ENCODE measurements at regions of chr12 and their contacts with region 1.

Region 1: DNA sequence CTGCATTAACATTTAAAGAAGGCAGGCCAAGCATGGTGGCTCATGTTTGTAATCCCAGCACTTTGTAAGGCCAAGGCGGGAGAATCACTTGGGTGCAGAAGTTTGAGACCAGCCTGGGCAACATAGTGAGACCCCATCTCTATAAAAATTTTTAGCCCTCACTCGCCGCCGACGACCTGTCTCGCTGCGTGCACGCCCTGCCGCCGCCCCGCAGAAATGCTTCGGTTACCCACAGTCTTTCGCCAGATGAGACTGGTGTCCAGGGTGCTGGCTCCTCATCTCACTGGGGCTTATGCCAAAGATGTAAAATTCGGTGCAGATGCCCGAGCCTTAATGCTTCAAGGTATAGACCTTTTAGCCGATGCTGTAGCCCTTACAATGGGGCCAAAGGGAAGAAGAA is 10.8 kb upstream of the RBMS2 start:
- DNase-seq: no peak
- ATAC-seq: no peak
- H3K4me3 ChIP-seq: no peak overlapping the region
- H3K27ac ChIP-seq: no peak overlapping the region
- H3K4me1 ChIP-seq: no peaks in the 10 kb centered on the region
- H3K27me3 ChIP-seq: no peaks in the 10 kb centered on the region

Region 2: GRCh38 chr12:56571126-56571525 is 60.3 kb after region 1 on chr12:
- intact Hi-C with region 1: loop called in 3 of 4 experiments (anchors 2 to 5 kb)
- DNase-seq: peak in 2 of 3 donors; percentile 53 to 55
- ATAC-seq: peak; percentile 8 to 12
- H3K4me3 ChIP-seq: no peak overlapping the region
- H3K27ac ChIP-seq: no peak overlapping the region
- H3K4me1 ChIP-seq: peaks cover 6% of the 10 kb centered on the region
- H3K27me3 ChIP-seq: no peaks in the 10 kb centered on the region

Region 3: DNA sequence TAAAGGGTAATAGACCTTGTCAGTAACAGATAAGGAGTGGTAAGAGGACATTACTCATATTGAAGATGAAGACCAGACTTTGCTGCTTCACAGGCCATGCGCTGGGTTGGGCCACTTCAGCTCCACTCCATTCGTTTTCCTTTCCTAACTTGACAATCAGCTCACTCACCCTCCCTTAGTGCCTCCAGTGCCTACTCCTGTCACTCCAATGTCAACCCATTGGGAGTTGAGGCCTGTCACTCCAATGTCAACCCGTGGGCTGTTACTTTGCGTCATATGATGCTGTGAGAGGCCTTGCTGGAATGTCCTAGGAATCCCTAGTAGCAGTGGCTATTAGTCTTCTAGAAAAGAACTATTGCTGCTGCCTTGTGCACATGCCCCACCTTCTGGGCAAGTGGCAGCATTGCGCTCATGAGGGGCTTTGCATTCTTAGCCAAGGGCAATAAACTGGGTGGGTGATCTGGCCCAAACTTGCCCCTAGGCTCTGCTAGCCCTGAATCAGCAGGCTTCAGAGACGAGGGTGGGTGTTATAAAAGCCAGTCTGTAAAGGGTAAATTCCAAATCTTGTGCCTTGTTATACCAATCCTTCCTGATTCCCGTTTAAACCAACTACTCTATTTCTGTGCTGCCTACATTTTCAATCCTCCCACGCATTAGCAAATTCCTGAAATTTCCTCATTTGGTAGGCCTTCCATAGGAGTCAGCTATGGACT is 83.3 kb after region 1 on chr12:
- intact Hi-C with region 1: loop called in 1 of 4 experiments (anchors 5 kb)
- DNase-seq: peak; percentile 37 to 70 (median 65)
- ATAC-seq: peak; percentile 38 to 47
- H3K4me3 ChIP-seq: no peak overlapping the region
- H3K27ac ChIP-seq: peak overlapping the region; percentile 37
- H3K4me1 ChIP-seq: no peaks in the 10 kb centered on the region
- H3K27me3 ChIP-seq: no peaks in the 10 kb centered on the region

Region 4: DNA sequence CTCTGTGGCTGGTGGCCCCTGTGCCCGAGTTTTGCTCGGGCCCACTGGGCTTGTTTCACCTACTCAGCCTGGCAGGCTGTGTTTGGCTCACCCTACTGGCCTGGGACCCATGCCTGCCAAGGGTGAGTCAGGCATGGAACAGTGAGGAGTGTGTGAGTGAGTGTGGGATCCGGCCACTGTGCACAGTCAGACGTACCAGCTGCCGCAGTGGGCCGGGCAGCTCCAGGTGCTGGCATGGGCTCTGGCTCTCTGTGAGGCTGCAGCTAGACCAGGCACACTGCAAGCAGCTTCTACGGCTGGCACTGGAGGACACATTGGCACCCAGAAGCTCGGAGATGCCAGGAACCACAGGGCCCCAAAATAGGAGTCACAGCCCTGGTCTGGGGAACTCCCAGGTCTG is 293.0 kb after region 1 on chr12:
- intact Hi-C with region 1: no loop called
- DNase-seq: no peak
- ATAC-seq: peak; percentile 79 to 80
- H3K4me3 ChIP-seq: no peak overlapping the region
- H3K27ac ChIP-seq: no peak overlapping the region
- H3K4me1 ChIP-seq: no peaks in the 10 kb centered on the region
- H3K27me3 ChIP-seq: no peaks in the 10 kb centered on the region